ENCODE measurements at regions of chr10 and their contacts with region 1.

Region 1: DNA sequence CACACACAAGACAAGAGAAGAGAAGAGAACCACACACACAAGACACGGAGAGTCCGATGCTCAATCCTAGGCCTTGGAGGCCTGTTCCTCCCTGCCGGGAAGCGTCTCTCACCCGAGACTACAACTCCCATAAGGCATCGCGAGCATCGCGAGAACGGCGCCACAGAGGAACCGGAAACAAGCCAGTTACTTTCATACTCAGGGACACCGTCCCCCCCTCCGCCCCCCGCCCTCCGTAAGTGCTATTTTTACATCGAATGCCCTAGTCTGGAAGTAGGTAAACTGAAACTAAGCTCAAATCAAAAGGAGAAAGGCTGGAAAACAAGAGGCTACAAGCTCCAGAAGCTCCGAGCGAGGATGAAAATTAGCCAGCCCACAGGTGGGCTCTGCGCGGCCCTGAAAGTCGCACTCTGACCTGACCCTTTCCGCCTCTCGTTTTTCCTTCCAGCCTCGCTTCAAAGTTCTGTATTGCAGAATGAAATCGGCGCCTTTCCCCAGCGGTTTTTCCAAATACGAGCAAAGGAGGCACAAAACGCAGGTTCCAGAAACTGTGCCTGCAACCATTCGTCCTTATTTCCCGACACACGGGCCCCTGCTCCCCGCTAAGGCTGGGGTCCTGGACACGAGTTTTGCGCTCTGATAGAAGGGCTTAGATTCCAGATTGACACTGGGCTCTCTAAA is 11.5 kb upstream of the DNAJC12 start:
- DNase-seq: peak; percentile 92
- H3K4me3 Mint-ChIP-seq: peak overlapping the region; percentile 91
- H3K27ac Mint-ChIP-seq: peak overlapping the region; percentile 95
- H3K4me1 Mint-ChIP-seq: no peaks in the 10 kb centered on the region
- H3K27me3 Mint-ChIP-seq: no peaks in the 10 kb centered on the region

Region 2: DNA sequence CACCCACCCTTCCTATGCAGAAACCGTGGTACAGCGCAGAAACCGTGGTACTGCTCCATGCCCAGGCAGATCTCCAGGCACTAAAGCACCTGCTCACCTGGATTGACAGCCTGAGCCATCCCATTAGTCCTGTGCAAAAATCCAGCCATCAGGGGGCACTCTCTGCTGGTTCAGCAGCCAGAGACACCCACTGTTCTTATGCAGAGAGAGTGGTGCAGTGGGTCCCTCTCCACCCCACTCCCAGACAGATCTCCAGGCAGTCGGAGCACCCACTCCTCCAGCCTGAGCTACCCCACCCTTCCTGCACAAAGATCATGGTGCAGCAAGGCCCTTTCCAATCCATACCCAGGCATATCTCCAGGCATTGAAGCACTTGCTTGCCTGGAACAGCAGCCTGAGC is 373.3 kb before region 1 on chr10:
- intact Hi-C with region 1: no loop called
- DNase-seq: no peak
- H3K4me3 Mint-ChIP-seq: no peak overlapping the region
- H3K27ac Mint-ChIP-seq: no peak overlapping the region
- H3K4me1 Mint-ChIP-seq: no peaks in the 10 kb centered on the region
- H3K27me3 Mint-ChIP-seq: no peaks in the 10 kb centered on the region

Region 3: GRCh38 chr10:67612577-67613537 is 236.6 kb before region 1 on chr10:
- intact Hi-C with region 1: loop called (anchors 1 kb)
- DNase-seq: peak; percentile 66
- H3K4me3 Mint-ChIP-seq: peak overlapping the region; percentile 47
- H3K27ac Mint-ChIP-seq: peak overlapping the region; percentile 49
- H3K4me1 Mint-ChIP-seq: peaks cover 23% of the 10 kb centered on the region
- H3K27me3 Mint-ChIP-seq: peaks cover 9% of the 10 kb centered on the region

Region 4: GRCh38 chr10:67803588-67804394 is 45.7 kb before region 1 on chr10:
- intact Hi-C with region 1: loop called (anchors 1 kb)
- DNase-seq: no peak
- H3K4me3 Mint-ChIP-seq: no peak overlapping the region
- H3K27ac Mint-ChIP-seq: peak overlapping the region; percentile 78
- H3K4me1 Mint-ChIP-seq: peaks cover 25% of the 10 kb centered on the region
- H3K27me3 Mint-ChIP-seq: no peaks in the 10 kb centered on the region

Region 5: GRCh38 chr10:67837541-67838314 is 11.7 kb before region 1 on chr10 and contains the start of gene DNAJC12:
- intact Hi-C with region 1: loop called (anchors 1 kb)
- DNase-seq: peak; percentile 7
- H3K4me3 Mint-ChIP-seq: peak within 1 kb of the TSS; percentile 84
- H3K27ac Mint-ChIP-seq: peak within 1 kb of the TSS; percentile 42
- H3K4me1 Mint-ChIP-seq: peaks cover 22% of the 10 kb centered on the region
- H3K27me3 Mint-ChIP-seq: no peaks in the 10 kb centered on the region
- total RNA-seq, gene DNAJC12: 25.0 and 27.2 TPM in 2 replicates

Region 6: GRCh38 chr10:67884313-67884841 is 34.9 kb after region 1 on chr10 and contains the start of gene SIRT1:
- intact Hi-C with region 1: loop called (anchors 1 kb)
- DNase-seq: peak; percentile 91
- H3K4me3 Mint-ChIP-seq: peak within 1 kb of the TSS; percentile 91
- H3K27ac Mint-ChIP-seq: peak within 1 kb of the TSS; percentile 87
- H3K4me1 Mint-ChIP-seq: peaks cover 28% of the 10 kb centered on the region
- H3K27me3 Mint-ChIP-seq: peaks cover 4% of the 10 kb centered on the region
- total RNA-seq, gene SIRT1: 27.4 and 29.3 TPM in 2 replicates

Measured in activated T-helper 1 cell treated with anti-CD3 and anti-CD28 coated beads, Interleukin-12 subunit alpha, Interleukin-12 subunit beta, Interleukin-2, Interleukin-4 antibody, amounts not matched to agents 30 ng/mL and 10 ng/mL and 1 ng/mL, durations not matched to agents 14 hours and 24 hours and 36 hours (primary cell).